Uterus (tissue), 4 donors: ENCODE measurements at regions of chr16 and their contacts with region 1.

Region 1: DNA sequence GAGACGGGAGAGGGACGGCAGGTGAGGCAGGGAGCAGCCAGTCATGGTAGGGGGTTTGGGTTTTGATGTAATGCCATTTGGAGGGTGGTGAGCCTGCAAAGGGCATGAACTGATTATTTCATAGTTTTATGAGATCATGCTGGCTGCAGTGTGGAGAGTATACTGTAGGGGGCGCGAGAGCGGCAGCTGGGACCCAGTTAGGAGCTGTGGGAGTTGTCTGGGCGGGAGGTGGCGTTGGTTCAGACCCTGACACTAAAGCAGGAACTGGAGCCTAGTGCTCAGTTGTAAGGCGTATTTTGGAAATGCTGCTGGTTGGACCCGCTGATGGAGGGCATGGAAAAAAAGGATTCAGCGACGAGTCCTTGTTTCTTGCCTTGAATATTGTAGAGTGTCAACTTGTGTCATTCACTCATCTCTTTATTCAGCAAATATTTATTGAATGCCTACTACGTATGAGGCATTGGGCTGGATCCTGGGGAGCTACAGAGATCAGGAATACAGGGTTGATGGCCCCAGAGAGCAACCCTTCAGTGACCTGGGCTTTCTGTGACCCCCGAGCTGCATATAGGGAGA is 23.7 kb upstream of the KDM8 start:
- DNase-seq: peak; percentile 78
- H3K4me3 ChIP-seq: no peak overlapping the region
- H3K27ac ChIP-seq: no peak overlapping the region
- H3K4me1 ChIP-seq: no peaks in the 10 kb centered on the region
- H3K27me3 ChIP-seq: no peaks in the 10 kb centered on the region
- CTCF ChIP-seq: peak; percentile 81 to 91 (median 85)
- POLR2A ChIP-seq: no peak

Region 2: DNA sequence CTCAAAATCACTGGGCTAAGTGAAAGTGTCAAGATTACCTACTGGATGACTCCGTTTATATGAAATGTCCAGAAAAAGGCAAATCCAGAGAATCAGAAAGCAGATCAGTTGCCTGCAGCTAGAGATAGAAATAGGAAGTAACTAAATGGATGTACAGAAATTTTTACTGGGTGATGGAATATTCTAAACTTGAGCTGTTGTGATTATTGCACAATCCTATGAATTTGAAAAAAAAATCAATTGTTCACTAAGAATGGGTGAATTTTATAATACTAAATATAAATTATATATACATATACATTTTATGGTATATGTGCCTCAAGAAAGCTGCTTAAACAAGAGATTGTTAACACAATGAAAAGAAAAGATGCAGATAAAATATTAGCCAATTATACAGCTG is 293.9 kb before region 1 on chr16:
- intact Hi-C with region 1: no loop called
- DNase-seq: no peak
- H3K4me3 ChIP-seq: no peak overlapping the region
- H3K27ac ChIP-seq: no peak overlapping the region
- H3K4me1 ChIP-seq: no peaks in the 10 kb centered on the region
- H3K27me3 ChIP-seq: no peaks in the 10 kb centered on the region
- CTCF ChIP-seq: no peak
- POLR2A ChIP-seq: no peak

Region 3: GRCh38 chr16:27455700-27456099 is 276.1 kb after region 1 on chr16:
- intact Hi-C with region 1: loop called (anchors 5 kb)
- DNase-seq: no peak
- H3K4me3 ChIP-seq: no peak overlapping the region
- H3K27ac ChIP-seq: no peak overlapping the region
- H3K4me1 ChIP-seq: no peaks in the 10 kb centered on the region
- H3K27me3 ChIP-seq: no peaks in the 10 kb centered on the region
- CTCF ChIP-seq: no peak
- POLR2A ChIP-seq: no peak

Region 4: DNA sequence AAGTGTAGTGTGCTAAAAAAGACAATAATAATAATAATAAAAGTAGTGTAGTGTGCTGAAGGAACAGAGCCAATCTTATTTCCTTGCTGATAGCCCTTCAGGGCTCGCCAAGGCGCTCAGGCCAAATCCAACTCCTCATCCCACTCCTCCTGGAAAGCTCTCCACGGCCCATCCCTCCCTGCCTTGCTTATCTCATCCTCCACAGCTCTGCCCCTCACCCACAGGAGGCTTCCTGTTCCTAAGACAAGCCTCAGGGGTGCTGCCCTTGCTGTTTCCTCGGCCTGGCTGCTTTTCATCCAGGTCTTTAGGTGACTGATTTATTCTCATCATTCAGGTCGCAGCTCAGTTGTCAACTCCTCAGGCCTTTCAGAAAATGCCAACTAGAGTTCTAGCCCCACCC is 358.9 kb after region 1 on chr16:
- intact Hi-C with region 1: no loop called
- DNase-seq: no peak
- H3K4me3 ChIP-seq: no peak overlapping the region
- H3K27ac ChIP-seq: no peak overlapping the region
- H3K4me1 ChIP-seq: no peaks in the 10 kb centered on the region
- H3K27me3 ChIP-seq: no peaks in the 10 kb centered on the region
- CTCF ChIP-seq: no peak
- POLR2A ChIP-seq: no peak